ENCODE measurements at regions of chr7 and their contacts with region 1.

Region 1: GRCh38 chr7:64313740-64314491 is at the start of gene ZNF736:
- DNase-seq: peak; percentile 87 to 93 (median 89)
- H3K4me3 ChIP-seq: peak within 1 kb of the TSS; percentile 88 to 97
- H3K4me3 Mint-ChIP-seq: peak within 1 kb of the TSS; percentile 98 to 99 (median 99)
- H3K27ac ChIP-seq: peak within 1 kb of the TSS; percentile 59
- H3K27ac Mint-ChIP-seq: peak within 1 kb of the TSS; percentile 96 to 99 (median 98)
- H3K4me1 ChIP-seq: peaks cover 27% of the 10 kb centered on the region
- H3K4me1 Mint-ChIP-seq: peaks cover 16 to 50% (median 36%) of the 10 kb centered on the region in 4 donors
- H3K27me3 ChIP-seq: no peaks in the 10 kb centered on the region
- H3K27me3 Mint-ChIP-seq: no peaks in the 10 kb centered on the region
- total RNA-seq, gene ZNF736: 43.6 to 48.2 TPM

Region 2: GRCh38 chr7:63900394-63901203 is 413.3 kb before region 1 on chr7:
- CTCF ChIA-PET with region 1: no interaction called
- POLR2A ChIA-PET with region 1: no interaction called
- intact Hi-C with region 1: loop called (anchors 2 kb)
- DNase-seq: peak; percentile 79 to 94 (median 92)
- H3K4me3 ChIP-seq: peak overlapping the region; percentile 41 to 61
- H3K4me3 Mint-ChIP-seq: peak overlapping the region; percentile 93 to 99 (median 96)
- H3K27ac ChIP-seq: peak overlapping the region; percentile 68
- H3K27ac Mint-ChIP-seq: peak overlapping the region; percentile 82 to 99 (median 98)
- H3K4me1 ChIP-seq: no peaks in the 10 kb centered on the region
- H3K4me1 Mint-ChIP-seq: peaks cover 0 to 20% (median 6%) of the 10 kb centered on the region in 4 donors
- H3K27me3 ChIP-seq: no peaks in the 10 kb centered on the region
- H3K27me3 Mint-ChIP-seq: no peaks in the 10 kb centered on the region

Region 3: DNA sequence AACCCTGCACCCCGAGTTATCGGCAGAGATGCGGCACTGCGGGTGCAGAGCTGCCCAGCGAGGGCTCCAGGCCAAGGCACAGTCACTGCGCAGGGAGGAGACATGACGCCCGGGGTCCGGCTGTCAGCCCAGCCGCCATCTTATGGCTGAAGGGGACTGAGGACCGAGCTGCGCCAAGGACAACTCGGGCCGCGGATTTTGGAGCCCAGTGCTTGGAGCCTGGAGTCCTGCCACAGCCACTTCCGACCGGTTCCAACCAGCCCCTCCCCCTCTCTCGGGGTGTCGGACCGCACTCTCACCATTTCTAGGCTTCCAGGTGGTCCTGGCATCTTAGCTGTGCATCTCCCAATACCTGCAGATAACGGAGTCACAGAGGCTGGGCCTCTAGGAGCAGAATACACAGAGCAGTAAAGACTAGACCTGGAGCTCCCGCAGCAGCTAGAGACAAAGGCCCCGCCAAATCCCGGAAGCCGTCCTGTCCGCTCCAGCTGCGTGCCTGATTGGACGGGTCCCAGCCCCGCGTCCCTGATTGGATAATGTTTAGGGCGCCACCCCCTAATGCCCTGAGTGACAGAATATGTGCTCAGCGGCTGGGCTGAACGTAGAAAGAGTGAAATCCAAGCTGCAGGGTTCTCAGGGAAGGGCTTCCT is 248.8 kb after region 1 on chr7 and contains the start of gene ZNF680:
- CTCF ChIA-PET with region 1: no interaction called
- POLR2A ChIA-PET with region 1: interaction called, 24 read pairs
- intact Hi-C with region 1: loop called (anchors 1 kb)
- DNase-seq: peak; percentile 89 to 93 (median 90)
- H3K4me3 ChIP-seq: peak within 1 kb of the TSS; percentile 47 to 70
- H3K4me3 Mint-ChIP-seq: peak within 1 kb of the TSS; percentile 100
- H3K27ac ChIP-seq: peak within 1 kb of the TSS; percentile 57
- H3K27ac Mint-ChIP-seq: peak within 1 kb of the TSS; percentile 97 to 99 (median 99)
- H3K4me1 ChIP-seq: peaks cover 20% of the 10 kb centered on the region
- H3K4me1 Mint-ChIP-seq: peaks cover 21 to 46% (median 36%) of the 10 kb centered on the region in 4 donors
- H3K27me3 ChIP-seq: no peaks in the 10 kb centered on the region
- H3K27me3 Mint-ChIP-seq: no peaks in the 10 kb centered on the region
- total RNA-seq, gene ZNF680: 17.7 to 19.6 TPM

Region 4: GRCh38 chr7:64794171-64794844 is 480.4 kb after region 1 on chr7 and contains the start of gene ZNF138:
- CTCF ChIA-PET with region 1: interaction called, 3 read pairs
- POLR2A ChIA-PET with region 1: interaction called, 6 read pairs
- intact Hi-C with region 1: loop called (anchors 2 kb)
- DNase-seq: peak; percentile 92 to 95 (median 93)
- H3K4me3 ChIP-seq: peak within 1 kb of the TSS; percentile 87 to 95
- H3K4me3 Mint-ChIP-seq: peak within 1 kb of the TSS; percentile 97 to 99 (median 99)
- H3K27ac ChIP-seq: peak within 1 kb of the TSS; percentile 75
- H3K27ac Mint-ChIP-seq: peak within 1 kb of the TSS; percentile 97 to 99 (median 98)
- H3K4me1 ChIP-seq: peaks cover 27% of the 10 kb centered on the region
- H3K4me1 Mint-ChIP-seq: peaks cover 18 to 47% (median 30%) of the 10 kb centered on the region in 4 donors
- H3K27me3 ChIP-seq: no peaks in the 10 kb centered on the region
- H3K27me3 Mint-ChIP-seq: no peaks in the 10 kb centered on the region
- total RNA-seq, gene ZNF138: 12.1 to 14.3 TPM